ENCODE measurements at regions of chr7 and their contacts with region 1.

Region 1: GRCh38 chr7:95596198-95597063 is at the start of gene PDK4:
- DNase-seq: peak; percentile 99
- H3K4me3 ChIP-seq: peak within 1 kb of the TSS; percentile 70 to 93 (median 83)
- H3K27ac ChIP-seq: peak within 1 kb of the TSS; percentile 92 to 99 (median 95)
- H3K4me1 ChIP-seq: peaks cover 0 to 39% (median 34%) of the 10 kb centered on the region in 4 donors
- H3K27me3 ChIP-seq: no peaks in the 10 kb centered on the region
- CTCF ChIP-seq: no peak
- EP300 ChIP-seq: peak; percentile 63 to 90 (median 78)
- POLR2A ChIP-seq: peak; percentile 79 to 84
- total RNA-seq, gene PDK4: 254 to 1,066 (median 595) TPM

Region 2: GRCh38 chr7:95558864-95559263 is 37.6 kb before region 1 on chr7:
- intact Hi-C with region 1: no loop called
- DNase-seq: no peak
- H3K4me3 ChIP-seq: no peak overlapping the region
- H3K27ac ChIP-seq: no peak overlapping the region
- H3K4me1 ChIP-seq: no peaks in the 10 kb centered on the region
- H3K27me3 ChIP-seq: no peaks in the 10 kb centered on the region
- CTCF ChIP-seq: no peak
- EP300 ChIP-seq: no peak
- POLR2A ChIP-seq: no peak

Region 3: DNA sequence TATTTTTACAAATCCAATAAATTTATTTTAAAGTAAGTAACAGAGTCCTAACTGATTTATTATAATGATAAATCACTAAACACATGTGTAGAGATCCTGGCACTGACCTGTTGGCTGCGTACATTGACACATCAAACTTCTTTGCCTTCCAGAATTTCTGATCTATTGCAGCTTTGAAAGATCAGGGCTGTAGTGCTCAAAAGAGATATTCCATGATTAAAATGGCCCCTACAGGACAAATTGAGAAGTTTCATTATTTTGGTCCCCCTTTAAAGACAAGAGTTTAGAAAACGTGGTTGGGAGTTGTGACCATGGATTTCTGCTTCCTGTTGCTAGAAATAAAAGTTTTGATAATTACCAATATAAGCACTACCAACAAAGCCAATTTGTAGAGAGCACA is 87.6 kb after region 1 on chr7:
- intact Hi-C with region 1: loop called (anchors 2 kb)
- DNase-seq: no peak
- H3K4me3 ChIP-seq: no peak overlapping the region
- H3K27ac ChIP-seq: peak overlapping the region in 3 of 4 donors; percentile 7 to 42 (median 12)
- H3K4me1 ChIP-seq: peaks cover 0 to 15% (median 4%) of the 10 kb centered on the region in 4 donors
- H3K27me3 ChIP-seq: no peaks in the 10 kb centered on the region
- CTCF ChIP-seq: peak in 3 of 4 experiments; percentile 60 to 78 (median 68)
- EP300 ChIP-seq: no peak
- POLR2A ChIP-seq: no peak